Thyroid gland (tissue), 4 donors: ENCODE measurements at regions of chr17 and their contacts with region 1.

Region 1: DNA sequence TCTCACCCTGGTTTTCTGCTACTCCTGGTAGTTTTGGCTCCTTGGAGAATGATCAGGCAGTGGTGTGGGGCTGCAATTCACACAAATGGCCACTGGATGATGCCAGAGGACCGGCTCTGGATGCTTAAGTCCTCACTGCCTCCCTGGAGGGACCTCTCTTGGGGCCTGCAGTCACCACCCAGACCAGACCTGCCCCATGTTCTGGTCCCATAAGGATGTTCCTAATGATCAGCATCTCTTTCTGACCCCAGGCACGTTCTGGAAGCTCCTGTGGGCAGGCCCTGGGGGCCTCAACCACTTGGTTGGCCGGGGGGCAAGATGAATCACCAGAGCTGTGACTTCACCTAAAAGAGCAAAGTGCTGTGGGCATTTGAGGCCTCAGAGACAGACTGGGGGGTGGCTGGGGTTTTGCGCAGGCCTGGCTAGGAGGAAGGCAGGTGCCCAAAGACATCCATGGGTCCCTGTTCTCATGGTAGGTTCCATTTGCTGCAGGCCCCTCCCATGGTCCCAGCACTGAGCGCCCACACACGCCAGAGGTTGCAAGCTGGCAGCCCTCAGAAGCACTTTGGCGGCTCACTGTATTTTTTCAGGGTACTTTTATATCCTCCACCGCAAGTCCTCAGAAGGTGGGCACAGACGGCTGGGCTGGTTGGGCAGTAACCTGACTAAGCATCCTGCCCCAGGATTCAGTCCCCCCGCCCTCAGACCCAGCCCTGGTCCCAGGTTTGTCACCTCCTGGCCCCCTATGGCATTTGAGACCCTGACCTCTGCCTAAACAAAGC is 53.2 kb downstream of the NT5M start:
- DNase-seq: peak; percentile 88 to 89
- H3K4me3 ChIP-seq: no peak overlapping the region
- H3K27ac ChIP-seq: peak overlapping the region in 2 of 3 donors; percentile 3 to 20
- H3K4me1 ChIP-seq: peaks cover 0 to 15% of the 10 kb centered on the region in 2 donors
- H3K27me3 ChIP-seq: no peaks in the 10 kb centered on the region
- CTCF ChIP-seq: peak; percentile 99 to 100 (median 100)
- POLR2A ChIP-seq: no peak

Region 2: GRCh38 chr17:17496189-17497064 is 140.1 kb after region 1 on chr17 and contains the start of gene RASD1:
- intact Hi-C with region 1: loop called (anchors 5 kb)
- DNase-seq: peak; percentile 91
- H3K4me3 ChIP-seq: peak within 1 kb of the TSS; percentile 9 to 80 (median 76)
- H3K27ac ChIP-seq: peak within 1 kb of the TSS; percentile 85 to 96 (median 94)
- H3K4me1 ChIP-seq: peaks cover 7 to 18% of the 10 kb centered on the region in 2 donors
- H3K27me3 ChIP-seq: no peaks in the 10 kb centered on the region
- CTCF ChIP-seq: peak; percentile 31 to 99 (median 94)
- POLR2A ChIP-seq: peak; percentile 99 to 100
- total RNA-seq, gene RASD1: 114 to 149 (median 141) TPM

Region 3: DNA sequence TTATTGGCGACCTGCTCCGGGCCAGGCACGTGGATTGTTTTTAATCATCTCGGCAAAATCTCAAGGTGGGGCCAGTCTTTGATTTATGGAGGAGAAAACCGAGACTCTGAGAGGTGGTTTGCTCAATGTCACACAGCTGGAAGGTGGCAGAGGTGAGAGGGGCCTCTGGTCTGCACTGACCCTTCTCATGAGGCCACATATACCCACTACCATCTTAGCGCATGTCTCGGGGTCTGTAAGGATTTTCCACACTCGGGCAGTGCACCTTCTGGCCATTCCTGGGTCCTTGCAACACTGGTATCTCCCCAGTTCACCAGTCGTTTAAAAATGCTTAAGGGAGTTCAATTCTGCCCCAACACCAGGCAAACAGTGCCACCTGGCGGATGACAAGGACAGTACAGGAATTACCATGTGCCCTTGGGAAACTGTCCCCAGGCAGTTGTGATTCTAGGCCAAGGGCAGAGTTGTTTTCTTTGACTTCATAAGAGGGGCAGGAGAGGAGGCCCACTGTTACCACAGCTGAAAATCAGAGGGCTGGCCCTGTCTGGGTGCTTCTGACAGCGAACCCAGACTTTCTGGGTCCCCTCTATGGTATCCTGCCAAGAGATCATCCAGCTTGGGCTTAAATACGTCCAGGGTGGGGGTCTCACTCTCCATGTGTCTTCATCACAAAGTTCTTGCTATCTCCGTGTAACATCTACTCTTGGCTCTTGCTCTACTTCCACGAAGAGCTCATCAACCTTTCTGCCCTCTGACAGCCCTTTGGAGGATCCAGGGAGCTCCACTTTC is 285.5 kb after region 1 on chr17:
- intact Hi-C with region 1: loop called (anchors 2 kb)
- DNase-seq: peak; percentile 85 to 91
- H3K4me3 ChIP-seq: no peak overlapping the region
- H3K27ac ChIP-seq: peak overlapping the region; percentile 2 to 52 (median 52)
- H3K4me1 ChIP-seq: peaks cover 5 to 11% of the 10 kb centered on the region in 2 donors
- H3K27me3 ChIP-seq: no peaks in the 10 kb centered on the region
- CTCF ChIP-seq: peak; percentile 77 to 97 (median 92)
- POLR2A ChIP-seq: no peak